ENCODE measurements at regions of chr16 and their contacts with region 1.

Region 1: GRCh38 chr16:88811769-88812512 is at the start of gene APRT:
- DNase-seq: peak; percentile 84 to 96
- H3K4me3 ChIP-seq: peak within 1 kb of the TSS; percentile 66
- H3K4me1 ChIP-seq: peaks cover 13% of the 10 kb centered on the region
- H3K27me3 ChIP-seq: no peaks in the 10 kb centered on the region

Region 2: GRCh38 chr16:89167425-89167941 is 355.5 kb after region 1 on chr16:
- in situ Hi-C with region 1: loop called (anchors 10 kb)
- DNase-seq: peak; percentile 70 to 97
- H3K4me3 ChIP-seq: no peak overlapping the region
- H3K4me1 ChIP-seq: peaks cover 6% of the 10 kb centered on the region
- H3K27me3 ChIP-seq: no peaks in the 10 kb centered on the region

Region 3: GRCh38 chr16:89217388-89218191 is 405.6 kb after region 1 on chr16 and contains the start of gene ZNF778:
- in situ Hi-C with region 1: loop called (anchors 10 kb)
- DNase-seq: peak; percentile 69 to 84
- H3K4me3 ChIP-seq: peak within 1 kb of the TSS; percentile 76
- H3K4me1 ChIP-seq: peaks cover 11% of the 10 kb centered on the region
- H3K27me3 ChIP-seq: no peaks in the 10 kb centered on the region

Region 4: DNA sequence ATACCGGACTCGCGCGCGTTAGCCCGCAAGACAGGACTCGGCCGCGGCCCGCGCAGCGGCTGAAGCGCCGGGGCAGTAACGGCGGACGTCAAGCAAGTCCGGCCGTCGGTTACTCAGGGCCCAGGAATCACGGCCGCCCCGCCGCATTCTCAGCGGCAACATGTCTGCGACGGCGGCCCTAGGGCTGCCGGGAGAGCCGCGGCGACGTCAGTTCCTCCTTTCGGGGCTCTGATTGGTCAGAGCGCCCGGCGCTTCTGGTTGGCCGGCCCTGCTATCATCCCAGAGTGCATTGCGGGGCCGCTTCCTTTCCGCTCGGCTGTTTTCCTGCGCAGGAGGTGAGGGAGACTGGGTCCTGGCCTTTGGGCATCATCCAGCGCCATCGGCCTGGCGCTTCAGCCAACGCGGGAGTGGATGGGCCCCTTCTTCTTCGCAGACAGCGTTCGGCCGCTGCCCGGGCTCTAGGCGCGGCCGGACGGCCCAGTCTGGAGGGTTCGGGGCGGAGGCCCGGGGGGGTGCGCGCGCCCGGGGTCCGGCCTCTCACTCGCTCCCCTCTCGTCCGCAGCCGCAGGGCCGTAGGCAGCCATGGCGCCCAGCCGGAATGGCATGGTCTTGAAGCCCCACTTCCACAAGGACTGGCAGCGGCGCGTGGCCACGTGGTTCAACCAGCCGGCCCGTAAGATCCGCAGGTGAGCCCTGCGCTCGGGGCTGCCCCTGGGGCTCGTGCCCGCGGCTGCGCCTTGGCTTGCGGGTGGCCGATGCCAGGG is 748.6 kb after region 1 on chr16 and contains the start of gene RPL13:
- in situ Hi-C with region 1: loop called (anchors 25 kb)
- DNase-seq: peak; percentile 90 to 94
- H3K4me3 ChIP-seq: peak within 1 kb of the TSS; percentile 73
- H3K4me1 ChIP-seq: peaks cover 40% of the 10 kb centered on the region
- H3K27me3 ChIP-seq: no peaks in the 10 kb centered on the region

Measured in HAP-1 (cell line).